ENCODE measurements at regions of chr16 and their contacts with region 1.

Region 1: DNA sequence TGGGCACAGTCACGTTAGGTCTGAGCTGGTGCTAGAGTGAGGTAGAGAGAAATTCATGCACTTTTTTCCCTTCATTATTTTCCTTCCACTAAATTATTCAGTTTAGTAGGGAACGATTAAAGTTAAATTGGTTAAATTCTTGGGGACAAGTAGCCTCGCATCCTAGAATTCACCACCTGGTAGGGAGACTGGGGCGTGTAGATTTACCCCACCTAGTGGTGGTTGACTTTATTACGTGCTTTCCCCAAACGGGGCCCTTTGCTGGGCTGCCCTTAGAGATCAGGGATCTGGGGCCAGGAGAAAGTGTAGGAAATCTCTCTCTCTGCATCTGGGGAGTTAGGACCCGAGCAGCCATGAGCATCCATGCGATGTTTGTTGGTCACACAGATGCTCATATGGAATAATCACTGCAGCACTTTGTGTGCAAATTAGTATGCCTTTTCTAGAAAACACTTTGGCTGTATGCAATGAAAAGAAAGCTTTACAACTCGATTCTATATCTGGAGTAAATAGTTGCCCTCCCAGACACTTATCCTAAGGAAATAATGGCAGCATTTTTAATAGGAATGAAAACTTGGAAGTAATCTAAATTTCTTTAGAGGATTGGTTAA is 107.0 kb downstream of the PLCG2 start:
- DNase-seq: no peak
- ATAC-seq: peak; percentile 91
- H3K4me3 ChIP-seq: no peak overlapping the region
- H3K27ac ChIP-seq: no peak overlapping the region
- H3K4me1 ChIP-seq: no peaks in the 10 kb centered on the region
- H3K27me3 ChIP-seq: no peaks in the 10 kb centered on the region
- CTCF ChIP-seq: peak; percentile 68 to 71 (median 68); a peak in 5 of 6 replicates
- EP300 ChIP-seq: no peak
- POLR2A ChIP-seq: no peak
- RAD21 ChIP-seq: peak; percentile 54

Region 2: DNA sequence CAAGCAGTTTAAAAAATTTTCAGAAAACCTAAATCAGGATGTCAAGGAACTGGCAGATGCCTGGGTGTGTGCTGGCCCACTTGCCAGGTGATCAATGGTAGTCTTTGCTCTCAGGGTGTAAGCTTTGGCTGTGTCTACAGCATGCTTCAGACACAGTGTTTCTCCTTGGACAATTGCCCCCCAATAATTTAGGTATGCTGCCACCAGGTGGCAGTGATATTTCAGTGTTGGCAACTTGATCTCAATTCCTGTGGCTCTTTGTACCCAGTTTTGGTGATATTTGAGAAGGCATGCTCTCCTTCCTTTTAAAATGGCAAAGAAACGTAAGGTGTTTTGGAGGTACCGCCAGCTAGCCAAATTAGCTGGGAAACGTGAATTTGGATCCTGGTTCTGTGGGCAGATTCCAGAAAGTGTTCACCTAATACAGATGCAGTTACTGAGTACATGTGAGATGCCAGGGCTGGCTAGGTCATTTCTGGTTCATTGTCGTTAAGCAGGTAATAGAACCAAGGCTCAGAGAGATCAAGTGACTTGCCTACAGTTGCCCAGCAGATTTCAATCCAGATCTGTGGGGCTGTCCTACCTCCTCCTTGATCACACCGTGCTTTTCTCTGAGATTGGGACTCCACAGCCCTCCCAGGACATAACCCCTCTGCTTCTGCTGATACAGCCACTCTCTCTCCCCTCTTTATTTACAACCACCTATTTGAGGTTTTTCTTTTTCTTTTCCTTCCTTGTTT is 262.5 kb before region 1 on chr16:
- CTCF ChIA-PET with region 1: no interaction called
- POLR2A ChIA-PET with region 1: no interaction called
- RAD21 ChIA-PET with region 1: no interaction called
- SMC1A ChIA-PET with region 1: no interaction called
- in situ Hi-C with region 1: no loop called
- intact Hi-C with region 1: no loop called
- DNase-seq: peak; percentile 37
- ATAC-seq: peak; percentile 76
- H3K4me3 ChIP-seq: no peak overlapping the region
- H3K27ac ChIP-seq: no peak overlapping the region
- H3K4me1 ChIP-seq: peaks cover 10% of the 10 kb centered on the region
- H3K27me3 ChIP-seq: no peaks in the 10 kb centered on the region
- CTCF ChIP-seq: peak; percentile 62 to 84 (median 68); a peak in 5 of 6 replicates
- EP300 ChIP-seq: no peak
- POLR2A ChIP-seq: no peak
- RAD21 ChIP-seq: peak; percentile 87

Region 3: GRCh38 chr16:82031116-82032084 is 145.3 kb after region 1 on chr16:
- CTCF ChIA-PET with region 1: no interaction called
- POLR2A ChIA-PET with region 1: no interaction called
- RAD21 ChIA-PET with region 1: no interaction called
- SMC1A ChIA-PET with region 1: no interaction called
- in situ Hi-C with region 1: no loop called
- intact Hi-C with region 1: no loop called
- DNase-seq: no peak
- ATAC-seq: no peak
- H3K4me3 ChIP-seq: no peak overlapping the region
- H3K27ac ChIP-seq: no peak overlapping the region
- H3K4me1 ChIP-seq: no peaks in the 10 kb centered on the region
- H3K27me3 ChIP-seq: peaks cover 0 to 3% of the 10 kb centered on the region in 2 experiments; a peak in 2 of 4 replicates
- CTCF ChIP-seq: peak; percentile 30 to 43 (median 41); a peak in 5 of 6 replicates
- EP300 ChIP-seq: no peak
- POLR2A ChIP-seq: no peak
- RAD21 ChIP-seq: peak; percentile 50

Region 4: DNA sequence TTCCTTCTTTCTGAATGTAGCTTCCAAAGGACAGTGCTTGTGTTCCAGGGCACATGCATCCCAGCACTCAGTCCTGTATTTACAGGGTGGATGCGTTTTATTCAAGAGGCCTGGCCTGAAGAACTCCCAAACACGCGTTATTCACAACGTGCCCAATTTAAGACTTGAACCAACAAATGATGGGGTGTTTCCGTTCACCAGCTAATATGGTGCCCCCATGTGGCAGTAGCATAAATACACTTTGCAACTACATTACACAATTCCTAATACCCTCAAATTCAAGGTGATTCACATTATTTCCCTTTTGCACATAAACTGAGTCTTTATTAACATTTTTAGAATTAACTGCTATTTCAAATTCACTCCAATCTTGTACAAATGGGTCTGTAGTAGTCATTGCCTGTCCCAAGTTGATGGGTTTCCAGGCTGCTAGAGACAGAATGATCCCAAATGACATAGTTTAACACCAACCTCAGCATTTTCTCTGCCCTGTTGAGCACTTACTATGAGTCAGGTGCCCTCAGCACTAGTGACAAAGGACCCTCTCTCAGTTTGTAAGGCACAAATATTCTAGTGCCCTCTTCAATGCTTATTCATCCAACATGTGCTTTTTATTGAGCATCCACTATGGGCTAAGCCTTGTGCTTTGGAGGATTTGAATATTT is 175.9 kb after region 1 on chr16:
- CTCF ChIA-PET with region 1: no interaction called
- POLR2A ChIA-PET with region 1: no interaction called
- RAD21 ChIA-PET with region 1: no interaction called
- SMC1A ChIA-PET with region 1: no interaction called
- in situ Hi-C with region 1: no loop called
- intact Hi-C with region 1: loop called (anchors 1 kb)
- DNase-seq: no peak
- ATAC-seq: peak; percentile 62
- H3K4me3 ChIP-seq: no peak overlapping the region
- H3K27ac ChIP-seq: no peak overlapping the region
- H3K4me1 ChIP-seq: no peaks in the 10 kb centered on the region
- H3K27me3 ChIP-seq: no peaks in the 10 kb centered on the region
- CTCF ChIP-seq: peak; percentile 48 to 59 (median 52)
- EP300 ChIP-seq: no peak
- POLR2A ChIP-seq: no peak
- RAD21 ChIP-seq: peak; percentile 36; the same call in 1 of the 2 replicates

Measured in GM12878 (cell line).